ENCODE measurements at regions of chr17 and their contacts with region 1.

Region 1: DNA sequence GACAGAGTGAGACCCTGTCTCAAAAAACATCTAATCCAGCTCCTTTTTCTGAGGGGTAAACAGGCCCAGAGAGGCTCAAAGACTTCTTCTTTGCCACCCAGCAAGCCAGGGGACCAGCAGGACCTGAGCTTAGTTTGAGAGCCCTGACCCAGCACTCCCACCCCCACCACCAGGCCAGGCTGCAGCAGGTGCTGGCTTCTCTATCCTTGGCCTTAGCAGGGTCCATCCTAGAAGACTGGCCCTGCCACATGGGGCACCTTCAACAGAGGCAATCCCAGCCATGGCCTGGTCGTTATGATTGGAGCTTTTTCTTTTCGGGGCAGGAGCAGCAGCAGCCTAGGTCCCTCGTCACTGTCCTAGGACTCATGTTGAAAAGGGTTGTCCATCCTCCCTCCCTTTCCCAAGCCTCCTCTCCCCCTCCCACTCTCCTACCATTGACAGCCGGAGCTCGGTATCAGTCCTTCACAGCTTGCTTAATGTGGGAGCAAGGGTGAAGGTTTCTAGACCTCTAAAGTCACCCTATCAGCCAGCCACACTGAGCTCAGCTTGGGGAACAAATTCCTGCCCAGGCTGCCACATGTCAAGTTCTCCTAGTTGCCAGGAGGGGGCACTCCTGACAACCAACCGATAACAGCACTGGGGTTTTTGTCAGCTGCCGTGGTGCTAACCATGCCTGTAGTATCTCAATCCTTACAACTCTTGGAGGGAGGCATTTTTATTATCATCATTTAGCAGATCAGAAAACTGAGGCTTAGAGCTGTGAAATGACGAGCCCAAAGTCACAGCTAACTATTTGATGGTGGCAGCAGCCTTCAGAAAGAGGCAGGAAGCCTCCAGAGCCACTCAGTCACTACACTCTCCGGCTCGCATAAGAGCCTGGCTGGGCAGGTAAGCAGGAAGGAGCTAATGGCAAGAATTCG is 11.2 kb downstream of the MRPL27 start:
- DNase-seq: peak; percentile 65
- H3K4me3 Mint-ChIP-seq: no peak overlapping the region
- H3K27ac Mint-ChIP-seq: peak overlapping the region; percentile 55
- H3K4me1 Mint-ChIP-seq: peaks cover 7% of the 10 kb centered on the region
- H3K27me3 Mint-ChIP-seq: no peaks in the 10 kb centered on the region

Region 2: DNA sequence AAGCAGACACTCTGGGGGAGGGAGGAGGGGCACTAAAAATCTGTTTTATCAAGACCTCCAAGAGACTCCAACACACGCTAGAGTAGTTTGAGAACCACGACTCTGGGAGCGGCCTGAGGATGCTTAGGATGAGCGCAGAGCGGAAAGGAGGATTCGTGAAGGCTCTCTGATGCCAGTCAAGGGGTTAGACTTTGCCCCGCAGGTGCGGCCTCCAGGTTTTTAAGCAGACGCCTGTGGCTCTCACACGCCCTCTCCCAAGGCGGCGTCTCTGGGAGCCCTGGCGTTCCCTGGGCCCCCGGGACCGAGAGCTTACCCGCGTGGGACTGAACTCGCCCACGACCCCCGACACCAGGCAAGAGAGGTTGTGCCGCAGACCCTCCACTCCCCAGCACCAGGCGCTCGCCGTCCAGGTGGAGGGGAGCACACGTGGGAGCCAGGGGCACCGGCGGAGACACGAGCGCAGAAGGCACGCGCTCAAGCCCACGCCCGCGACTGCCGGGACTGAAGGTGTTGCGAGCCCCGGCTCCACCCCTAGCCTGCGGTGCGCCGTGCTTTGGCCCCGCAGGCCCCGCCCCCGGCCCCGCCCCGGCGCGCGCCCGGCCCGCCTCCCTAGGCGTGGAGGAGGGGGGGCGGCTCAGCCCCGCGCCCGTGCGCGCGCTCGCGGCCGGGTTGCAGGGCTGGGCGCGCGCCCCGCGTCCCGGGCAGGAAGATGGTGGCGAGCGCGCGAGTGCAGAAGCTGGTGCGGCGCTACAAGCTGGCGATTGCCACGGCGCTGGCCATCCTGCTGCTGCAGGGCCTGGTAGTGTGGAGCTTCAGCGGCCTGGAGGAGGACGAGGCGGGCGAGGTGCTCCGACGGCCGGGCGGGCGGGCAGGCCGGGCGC is 16.1 kb before region 1 on chr17 and contains the start of gene XYLT2:
- CTCF ChIA-PET with region 1: interaction called, 37 read pairs
- POLR2A ChIA-PET with region 1: interaction called, 60 read pairs
- DNase-seq: peak; percentile 93
- H3K4me3 Mint-ChIP-seq: peak within 1 kb of the TSS; percentile 89
- H3K27ac Mint-ChIP-seq: peak within 1 kb of the TSS; percentile 90
- H3K4me1 Mint-ChIP-seq: peaks cover 39% of the 10 kb centered on the region
- H3K27me3 Mint-ChIP-seq: no peaks in the 10 kb centered on the region
- total RNA-seq, gene XYLT2: 26.7 to 29.7 TPM

Region 3: GRCh38 chr17:50372758-50373556 is 11.1 kb after region 1 on chr17 and contains the starts of genes EME1 and MRPL27:
- CTCF ChIA-PET with region 1: interaction called, 28 read pairs
- POLR2A ChIA-PET with region 1: interaction called, 78 read pairs
- DNase-seq: peak; percentile 89
- H3K4me3 Mint-ChIP-seq: peak within 1 kb of the TSS; percentile 97
- H3K27ac Mint-ChIP-seq: peak within 1 kb of the TSS; percentile 97
- H3K4me1 Mint-ChIP-seq: peaks cover 39% of the 10 kb centered on the region
- H3K27me3 Mint-ChIP-seq: no peaks in the 10 kb centered on the region
- total RNA-seq, gene EME1: 25.1 to 26.1 TPM
- total RNA-seq, gene MRPL27: 56.5 to 57.5 TPM

Region 4: DNA sequence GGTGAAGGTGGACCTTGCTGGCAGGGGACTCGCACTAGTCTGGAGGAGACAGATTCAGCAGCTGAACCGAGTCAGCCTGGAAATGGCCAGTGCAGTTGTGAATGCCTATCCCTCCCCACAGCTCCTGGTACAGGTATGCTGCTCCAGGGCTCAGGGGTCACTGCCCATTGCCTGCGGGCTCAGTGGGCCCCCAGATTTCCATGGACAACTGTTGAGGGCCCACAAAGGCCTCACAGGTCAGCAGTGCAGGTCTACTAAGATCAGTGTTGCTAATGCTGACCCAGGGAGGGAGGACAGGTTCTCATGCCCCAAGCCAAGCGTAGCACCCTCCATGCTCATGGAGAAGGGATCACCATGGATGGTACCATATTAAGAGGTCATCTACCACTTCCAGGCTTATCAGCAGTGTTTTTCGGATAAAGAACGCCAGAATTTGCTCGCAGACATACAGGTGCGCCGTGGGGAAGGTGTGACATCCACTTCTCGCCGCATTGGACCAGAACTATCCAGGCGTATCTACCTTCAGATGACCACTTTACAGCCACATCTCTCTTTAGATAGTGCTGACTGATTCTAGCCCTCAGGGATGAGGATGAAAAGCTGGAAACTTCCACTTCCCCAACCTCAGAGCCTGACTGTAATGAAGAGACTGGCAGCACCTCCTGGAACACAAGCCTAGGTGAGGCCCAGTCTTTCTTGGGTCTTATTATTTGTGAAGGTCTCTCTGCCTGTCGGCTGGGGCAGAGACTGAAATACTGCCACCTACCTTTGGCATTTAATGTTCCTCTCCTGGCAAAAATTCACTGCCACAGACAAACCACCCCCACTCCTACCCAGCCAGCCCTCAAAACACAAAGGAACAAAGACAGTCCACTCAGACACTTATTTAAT is 18.8 kb after region 1 on chr17:
- CTCF ChIA-PET with region 1: interaction called, 10 read pairs
- POLR2A ChIA-PET with region 1: no interaction called
- DNase-seq: no peak
- H3K4me3 Mint-ChIP-seq: no peak overlapping the region
- H3K27ac Mint-ChIP-seq: no peak overlapping the region
- H3K4me1 Mint-ChIP-seq: peaks cover 3% of the 10 kb centered on the region
- H3K27me3 Mint-ChIP-seq: no peaks in the 10 kb centered on the region

Region 5: GRCh38 chr17:50386510-50386909 is 24.7 kb after region 1 on chr17:
- CTCF ChIA-PET with region 1: interaction called, 10 read pairs
- POLR2A ChIA-PET with region 1: interaction called, 4 read pairs
- DNase-seq: no peak
- H3K4me3 Mint-ChIP-seq: no peak overlapping the region
- H3K27ac Mint-ChIP-seq: no peak overlapping the region
- H3K4me1 Mint-ChIP-seq: no peaks in the 10 kb centered on the region
- H3K27me3 Mint-ChIP-seq: no peaks in the 10 kb centered on the region

Region 6: GRCh38 chr17:50478391-50479381 is 116.9 kb after region 1 on chr17 and contains the start of gene RSAD1:
- CTCF ChIA-PET with region 1: interaction called, 24 read pairs
- POLR2A ChIA-PET with region 1: interaction called, 5 read pairs
- DNase-seq: peak; percentile 90
- H3K4me3 Mint-ChIP-seq: peak within 1 kb of the TSS; percentile 82
- H3K27ac Mint-ChIP-seq: peak within 1 kb of the TSS; percentile 68
- H3K4me1 Mint-ChIP-seq: peaks cover 25% of the 10 kb centered on the region
- H3K27me3 Mint-ChIP-seq: peaks cover 3% of the 10 kb centered on the region
- total RNA-seq, gene RSAD1: 24.5 to 28.4 TPM